ENCODE measurements at regions of chr2 and their contacts with region 1.

Region 1: DNA sequence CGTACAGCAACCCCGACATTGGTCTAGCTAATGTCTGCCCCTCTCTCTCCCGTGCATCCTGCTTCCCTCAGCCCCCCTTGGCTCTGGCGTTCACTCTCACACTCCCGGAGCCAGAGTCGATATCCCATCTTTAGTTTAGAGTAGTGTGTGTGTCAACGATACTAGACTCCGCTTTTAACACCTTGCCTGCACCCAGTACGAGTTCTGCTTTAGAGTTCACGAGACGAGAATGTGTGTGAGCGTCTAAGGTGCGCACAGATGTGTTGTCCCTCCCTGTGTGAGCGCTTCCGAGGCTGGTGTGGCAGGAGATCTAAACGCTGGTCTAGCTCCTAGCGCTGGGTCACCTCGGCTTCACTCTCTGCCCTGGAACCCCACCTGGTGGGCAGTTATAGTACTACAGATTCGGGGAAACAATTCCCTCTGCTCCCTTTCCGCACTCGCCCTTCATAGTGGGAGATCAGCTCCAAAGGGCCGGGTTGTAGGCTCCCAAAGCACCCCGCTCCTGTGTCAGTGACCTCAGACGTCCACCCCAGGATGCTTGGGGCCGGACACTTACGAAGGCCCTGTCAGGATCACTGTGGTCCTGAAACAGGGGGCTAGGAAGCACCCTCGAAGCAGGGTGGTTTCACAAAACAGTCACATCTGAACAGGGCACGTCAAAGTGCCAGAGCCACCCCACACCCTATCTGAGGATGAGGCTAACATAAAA is 2.6 kb upstream of the CYP26B1 start:
- DNase-seq: peak; percentile 87

Region 2: GRCh38 chr2:71545572-71546274 is 604.6 kb before region 1 on chr2:
- intact Hi-C with region 1: loop called (anchors 5 kb)
- DNase-seq: peak; percentile 84

Region 3: GRCh38 chr2:71592181-71592711 is 558.1 kb before region 1 on chr2:
- intact Hi-C with region 1: loop called in 1 of 2 experiments (anchors 10 kb)
- DNase-seq: no peak

Region 4: GRCh38 chr2:71798266-71799012 is 351.9 kb before region 1 on chr2:
- intact Hi-C with region 1: loop called (anchors 5 kb)
- DNase-seq: no peak

Region 5: DNA sequence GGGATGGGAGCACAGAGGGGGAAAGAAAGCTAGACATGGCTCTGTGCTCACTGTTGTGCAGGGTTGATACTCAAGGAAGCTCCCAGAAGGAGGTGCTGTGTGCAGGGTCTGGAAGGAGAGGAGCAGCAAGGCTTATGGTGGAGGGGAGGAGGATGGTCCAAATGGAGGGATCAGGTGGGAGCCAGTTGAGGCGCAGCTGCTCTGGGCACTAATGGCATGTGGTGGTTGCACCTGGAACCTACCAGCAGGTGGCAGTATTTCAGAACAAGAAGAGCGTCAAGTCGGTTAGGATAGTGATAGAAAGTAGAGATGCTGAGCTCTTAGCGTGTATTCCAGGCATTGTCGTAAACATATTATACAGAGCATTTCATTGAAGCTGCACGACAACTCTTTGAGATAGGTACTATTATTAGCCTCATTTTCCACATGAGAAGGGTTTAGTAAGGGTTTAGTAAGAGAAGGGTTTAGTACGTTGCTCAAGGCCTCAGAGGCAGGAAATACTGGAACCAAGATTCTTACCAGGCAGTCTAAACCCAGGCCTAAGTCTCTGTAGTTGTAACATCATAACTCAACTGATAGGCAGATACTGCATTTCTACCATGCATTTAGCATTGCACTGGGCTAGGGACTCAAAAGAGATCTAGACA is 226.3 kb before region 1 on chr2:
- intact Hi-C with region 1: loop called in 1 of 2 experiments (anchors 5 kb)
- DNase-seq: peak; percentile 82

Region 6: GRCh38 chr2:71930073-71930681 is 220.1 kb before region 1 on chr2:
- intact Hi-C with region 1: loop called (anchors 2 to 5 kb)
- DNase-seq: peak; percentile 76

Region 7: GRCh38 chr2:71974846-71975245 is 175.5 kb before region 1 on chr2:
- intact Hi-C with region 1: no loop called
- DNase-seq: no peak

Region 8: DNA sequence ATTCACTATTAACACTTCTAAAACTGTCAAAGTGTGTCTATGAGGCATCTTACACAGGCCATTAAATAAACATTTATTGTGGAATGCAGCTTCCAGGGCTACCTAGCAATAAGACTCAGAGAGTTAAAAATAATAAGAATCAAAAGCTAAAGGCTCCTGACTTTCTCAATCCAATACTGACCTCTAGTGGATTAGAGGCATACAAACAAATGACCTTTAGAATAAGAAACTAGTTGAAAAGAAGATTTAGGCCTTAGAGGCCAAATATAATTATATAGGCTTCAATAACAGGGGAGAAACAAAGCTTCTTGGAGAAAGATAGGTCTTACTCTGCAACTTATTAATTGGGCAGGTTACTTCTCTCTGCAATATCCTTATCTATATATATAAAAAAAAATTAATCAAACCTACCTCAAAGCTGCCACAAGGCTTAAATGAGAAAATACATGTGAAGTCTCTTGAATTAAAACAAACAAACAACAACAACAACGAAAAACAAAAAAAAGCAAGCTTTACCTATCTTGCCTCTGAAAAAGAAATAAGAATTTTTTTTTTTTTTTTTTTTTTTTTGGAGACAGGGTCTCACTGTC is 429.4 kb after region 1 on chr2:
- intact Hi-C with region 1: loop called in 1 of 2 experiments (anchors 10 kb)
- DNase-seq: no peak